Mammary epithelial cell (primary cell): ENCODE measurements at regions of chr2 and their contacts with region 1.

Region 1: DNA sequence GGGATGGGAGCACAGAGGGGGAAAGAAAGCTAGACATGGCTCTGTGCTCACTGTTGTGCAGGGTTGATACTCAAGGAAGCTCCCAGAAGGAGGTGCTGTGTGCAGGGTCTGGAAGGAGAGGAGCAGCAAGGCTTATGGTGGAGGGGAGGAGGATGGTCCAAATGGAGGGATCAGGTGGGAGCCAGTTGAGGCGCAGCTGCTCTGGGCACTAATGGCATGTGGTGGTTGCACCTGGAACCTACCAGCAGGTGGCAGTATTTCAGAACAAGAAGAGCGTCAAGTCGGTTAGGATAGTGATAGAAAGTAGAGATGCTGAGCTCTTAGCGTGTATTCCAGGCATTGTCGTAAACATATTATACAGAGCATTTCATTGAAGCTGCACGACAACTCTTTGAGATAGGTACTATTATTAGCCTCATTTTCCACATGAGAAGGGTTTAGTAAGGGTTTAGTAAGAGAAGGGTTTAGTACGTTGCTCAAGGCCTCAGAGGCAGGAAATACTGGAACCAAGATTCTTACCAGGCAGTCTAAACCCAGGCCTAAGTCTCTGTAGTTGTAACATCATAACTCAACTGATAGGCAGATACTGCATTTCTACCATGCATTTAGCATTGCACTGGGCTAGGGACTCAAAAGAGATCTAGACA is 223.7 kb downstream of the CYP26B1 start:
- DNase-seq: peak; percentile 56
- H3K4me3 ChIP-seq: no peak overlapping the region
- H3K27ac ChIP-seq: no peak overlapping the region
- H3K4me1 ChIP-seq: no peaks in the 10 kb centered on the region
- H3K27me3 ChIP-seq: no peaks in the 10 kb centered on the region
- CTCF ChIP-seq: peak; percentile 81 to 89

Region 2: GRCh38 chr2:71545572-71546274 is 378.3 kb before region 1 on chr2:
- CTCF ChIA-PET with region 1: no interaction called
- dilution Hi-C with region 1: no loop called
- in situ Hi-C with region 1: no loop called
- intact Hi-C with region 1: loop called (anchors 5 kb)
- DNase-seq: peak; percentile 30
- H3K4me3 ChIP-seq: no peak overlapping the region
- H3K27ac ChIP-seq: no peak overlapping the region
- H3K4me1 ChIP-seq: peaks cover 4% of the 10 kb centered on the region
- H3K27me3 ChIP-seq: no peaks in the 10 kb centered on the region
- CTCF ChIP-seq: peak; percentile 71 to 87

Region 3: GRCh38 chr2:71995067-71995665 is 71.2 kb after region 1 on chr2:
- CTCF ChIA-PET with region 1: no interaction called
- dilution Hi-C with region 1: no loop called
- in situ Hi-C with region 1: no loop called
- intact Hi-C with region 1: loop called (anchors 1 kb)
- DNase-seq: peak; percentile 8
- H3K4me3 ChIP-seq: no peak overlapping the region
- H3K27ac ChIP-seq: no peak overlapping the region
- H3K4me1 ChIP-seq: no peaks in the 10 kb centered on the region
- H3K27me3 ChIP-seq: no peaks in the 10 kb centered on the region
- CTCF ChIP-seq: peak; percentile 18 to 55

Region 4: GRCh38 chr2:72137498-72138010 is 213.5 kb after region 1 on chr2:
- CTCF ChIA-PET with region 1: no interaction called
- dilution Hi-C with region 1: loop called (anchors 25 kb)
- in situ Hi-C with region 1: no loop called
- intact Hi-C with region 1: loop called (anchors 1 kb)
- DNase-seq: peak; percentile 28
- H3K4me3 ChIP-seq: no peak overlapping the region
- H3K27ac ChIP-seq: no peak overlapping the region
- H3K4me1 ChIP-seq: no peaks in the 10 kb centered on the region
- H3K27me3 ChIP-seq: no peaks in the 10 kb centered on the region
- CTCF ChIP-seq: peak; percentile 84 to 98

Region 5: DNA sequence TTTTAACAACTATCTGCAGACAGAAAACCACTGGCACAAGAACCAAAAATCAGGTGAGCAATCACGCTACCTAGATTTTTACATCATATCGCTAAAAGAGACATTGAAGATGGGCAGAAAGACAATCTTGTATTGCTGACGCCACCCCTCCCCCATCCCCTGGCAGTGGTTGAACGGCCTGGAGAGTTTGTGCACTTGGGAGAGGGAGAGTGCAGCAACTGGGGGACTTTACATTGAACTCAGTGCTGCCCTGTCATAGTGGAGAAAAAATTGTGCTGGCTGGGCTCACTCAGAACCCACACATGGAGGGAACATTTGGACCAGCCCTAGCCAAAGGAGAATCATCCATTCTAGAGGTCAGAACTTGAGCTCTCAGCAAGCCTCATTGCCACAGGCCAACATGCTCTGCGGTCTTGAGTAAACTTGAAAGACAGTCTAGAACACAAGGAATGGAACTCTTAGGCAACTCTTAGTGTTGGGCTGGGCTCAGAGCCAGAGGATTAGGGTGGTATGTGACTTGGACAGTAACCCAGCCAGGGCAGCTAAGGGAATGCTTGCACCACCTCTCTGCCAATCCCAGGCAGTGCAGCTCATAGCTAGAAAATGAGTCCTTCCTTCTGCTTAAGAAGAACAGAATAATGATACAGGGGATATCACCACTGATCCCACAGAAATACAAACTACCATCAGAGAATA is 443.7 kb after region 1 on chr2:
- CTCF ChIA-PET with region 1: interaction called, 7 read pairs
- dilution Hi-C with region 1: no loop called
- in situ Hi-C with region 1: no loop called
- intact Hi-C with region 1: loop called (anchors 1 kb)
- DNase-seq: peak; percentile 98
- H3K4me3 ChIP-seq: no peak overlapping the region
- H3K27ac ChIP-seq: no peak overlapping the region
- H3K4me1 ChIP-seq: peaks cover 6% of the 10 kb centered on the region
- H3K27me3 ChIP-seq: no peaks in the 10 kb centered on the region
- CTCF ChIP-seq: peak; percentile 64 to 84

Region 6: DNA sequence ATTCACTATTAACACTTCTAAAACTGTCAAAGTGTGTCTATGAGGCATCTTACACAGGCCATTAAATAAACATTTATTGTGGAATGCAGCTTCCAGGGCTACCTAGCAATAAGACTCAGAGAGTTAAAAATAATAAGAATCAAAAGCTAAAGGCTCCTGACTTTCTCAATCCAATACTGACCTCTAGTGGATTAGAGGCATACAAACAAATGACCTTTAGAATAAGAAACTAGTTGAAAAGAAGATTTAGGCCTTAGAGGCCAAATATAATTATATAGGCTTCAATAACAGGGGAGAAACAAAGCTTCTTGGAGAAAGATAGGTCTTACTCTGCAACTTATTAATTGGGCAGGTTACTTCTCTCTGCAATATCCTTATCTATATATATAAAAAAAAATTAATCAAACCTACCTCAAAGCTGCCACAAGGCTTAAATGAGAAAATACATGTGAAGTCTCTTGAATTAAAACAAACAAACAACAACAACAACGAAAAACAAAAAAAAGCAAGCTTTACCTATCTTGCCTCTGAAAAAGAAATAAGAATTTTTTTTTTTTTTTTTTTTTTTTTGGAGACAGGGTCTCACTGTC is 655.7 kb after region 1 on chr2:
- CTCF ChIA-PET with region 1: no interaction called
- dilution Hi-C with region 1: no loop called
- in situ Hi-C with region 1: no loop called
- intact Hi-C with region 1: loop called (anchors 1 kb)
- DNase-seq: peak; percentile 28
- H3K4me3 ChIP-seq: no peak overlapping the region
- H3K27ac ChIP-seq: no peak overlapping the region
- H3K4me1 ChIP-seq: no peaks in the 10 kb centered on the region
- H3K27me3 ChIP-seq: no peaks in the 10 kb centered on the region
- CTCF ChIP-seq: peak; percentile 52 to 60

Region 7: GRCh38 chr2:72745679-72746368 is 821.8 kb after region 1 on chr2:
- CTCF ChIA-PET with region 1: no interaction called
- dilution Hi-C with region 1: no loop called
- in situ Hi-C with region 1: loop called in 1 of 2 experiments (anchors 25 kb)
- intact Hi-C with region 1: loop called (anchors 10 kb)
- DNase-seq: peak; percentile 46
- H3K4me3 ChIP-seq: no peak overlapping the region
- H3K27ac ChIP-seq: no peak overlapping the region
- H3K4me1 ChIP-seq: peaks cover 6% of the 10 kb centered on the region
- H3K27me3 ChIP-seq: no peaks in the 10 kb centered on the region
- CTCF ChIP-seq: peak; percentile 68 to 76